ENCODE measurements at regions of chr3 and their contacts with region 1.

Region 1: DNA sequence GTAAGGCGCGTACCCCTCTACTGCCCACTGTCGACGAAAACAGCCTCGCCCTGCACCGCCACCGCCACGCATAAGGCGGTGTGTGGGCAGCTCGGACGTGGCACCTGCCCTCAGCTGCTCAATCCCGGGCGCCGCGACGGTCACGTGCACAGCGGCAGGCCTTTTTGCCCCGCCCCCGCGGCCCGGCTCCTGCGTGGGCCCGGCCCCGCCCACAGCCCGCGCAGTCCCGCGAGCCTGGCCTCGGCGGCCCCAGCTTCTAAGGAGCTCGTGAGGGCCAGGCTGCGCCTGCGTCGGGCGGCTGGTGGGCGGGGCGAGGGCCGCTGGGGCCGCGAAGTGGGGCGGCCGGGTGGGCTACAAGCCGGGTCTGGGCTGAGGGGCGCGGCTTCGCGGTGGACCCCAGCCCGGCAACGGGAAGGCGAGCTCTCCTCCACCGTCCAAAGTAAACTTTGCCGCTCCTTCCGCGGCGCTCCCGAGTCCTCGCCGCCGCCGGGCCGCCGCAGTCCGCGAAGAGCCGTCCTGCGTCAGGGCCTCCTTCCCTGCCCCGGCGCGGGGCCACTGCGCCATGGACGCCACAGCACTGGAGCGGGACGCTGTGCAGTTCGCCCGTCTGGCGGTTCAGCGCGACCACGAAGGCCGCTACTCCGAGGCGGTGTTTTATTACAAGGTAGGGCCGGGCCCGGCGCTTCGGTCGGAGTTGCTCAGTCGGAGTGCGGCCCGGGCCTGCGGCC is at the start of gene CAPN7:
- DNase-seq: peak; percentile 97
- ATAC-seq: peak; percentile 89
- H3K4me3 ChIP-seq: peak within 1 kb of the TSS; percentile 71 to 95 (median 78)
- H3K4me3 Mint-ChIP-seq: peak within 1 kb of the TSS; percentile 94
- H3K27ac ChIP-seq: peak within 1 kb of the TSS; percentile 68 to 93
- H3K27ac Mint-ChIP-seq: peak within 1 kb of the TSS; percentile 93
- H3K4me1 ChIP-seq: peaks cover 16 to 19% of the 10 kb centered on the region in 2 donors
- H3K4me1 Mint-ChIP-seq: peaks cover 25% of the 10 kb centered on the region
- H3K27me3 ChIP-seq: no peaks in the 10 kb centered on the region
- H3K27me3 Mint-ChIP-seq: no peaks in the 10 kb centered on the region
- CTCF ChIP-seq: no peak
- total RNA-seq, gene CAPN7: 85.9 and 95.5 TPM in 2 replicates

Region 2: GRCh38 chr3:13282986-13283876 is 1922.9 kb before region 1 on chr3:
- CTCF ChIA-PET with region 1: no interaction called
- POLR2A ChIA-PET with region 1: no interaction called
- intact Hi-C with region 1: no loop called
- DNase-seq: peak; percentile 62
- ATAC-seq: peak; percentile 74
- H3K4me3 ChIP-seq: peak overlapping the region in 4 of 5 experiments; percentile 3 to 47 (median 36)
- H3K4me3 Mint-ChIP-seq: peak overlapping the region; percentile 86
- H3K27ac ChIP-seq: no peak overlapping the region
- H3K27ac Mint-ChIP-seq: no peak overlapping the region
- H3K4me1 ChIP-seq: peaks cover 21% of the 10 kb centered on the region in 2 donors
- H3K4me1 Mint-ChIP-seq: peaks cover 13% of the 10 kb centered on the region
- H3K27me3 ChIP-seq: peaks cover 2 to 58% (median 37%) of the 10 kb centered on the region in 4 experiments
- H3K27me3 Mint-ChIP-seq: peaks cover 46% of the 10 kb centered on the region
- CTCF ChIP-seq: peak; percentile 49

Region 3: DNA sequence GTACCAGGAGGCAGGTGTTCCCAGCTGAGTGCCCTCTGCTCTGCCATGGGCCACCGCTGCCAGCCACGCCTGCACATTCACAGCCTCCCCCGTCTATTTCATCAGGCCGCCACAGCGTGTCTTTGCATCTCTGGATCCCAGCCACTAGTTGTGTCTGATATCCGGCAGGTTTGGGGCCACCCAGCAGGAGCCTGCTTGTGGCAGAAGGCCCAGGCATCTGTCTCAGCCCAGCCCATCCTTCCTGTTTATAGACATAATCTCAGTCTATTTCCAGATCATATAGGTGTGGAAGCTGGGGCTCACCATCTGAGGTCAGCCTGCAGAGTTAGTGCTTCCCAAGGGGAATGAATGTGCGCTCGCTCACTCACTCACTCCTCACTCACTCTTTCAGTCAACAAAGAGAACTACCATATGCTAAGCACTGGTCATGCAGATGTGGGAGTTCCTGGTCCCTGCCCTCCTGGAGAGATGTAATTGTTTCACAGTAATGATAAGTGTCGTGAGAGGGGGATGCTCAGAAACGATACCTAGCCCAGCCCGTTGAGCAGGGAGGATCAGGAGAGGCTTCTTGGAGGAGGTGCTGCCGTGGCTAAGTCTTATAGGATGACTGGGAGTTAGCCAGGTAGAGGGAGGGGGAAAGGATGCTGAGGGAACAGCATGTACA is 326.8 kb before region 1 on chr3:
- CTCF ChIA-PET with region 1: no interaction called
- POLR2A ChIA-PET with region 1: no interaction called
- intact Hi-C with region 1: no loop called
- DNase-seq: no peak
- ATAC-seq: no peak
- H3K4me3 ChIP-seq: no peak overlapping the region
- H3K4me3 Mint-ChIP-seq: no peak overlapping the region
- H3K27ac ChIP-seq: no peak overlapping the region
- H3K27ac Mint-ChIP-seq: no peak overlapping the region
- H3K4me1 ChIP-seq: peaks cover 0 to 6% of the 10 kb centered on the region in 2 donors
- H3K4me1 Mint-ChIP-seq: peaks cover 6% of the 10 kb centered on the region
- H3K27me3 ChIP-seq: peaks cover 0 to 8% (median 0%) of the 10 kb centered on the region in 4 experiments
- H3K27me3 Mint-ChIP-seq: peaks cover 29% of the 10 kb centered on the region
- CTCF ChIP-seq: no peak

Region 4: DNA sequence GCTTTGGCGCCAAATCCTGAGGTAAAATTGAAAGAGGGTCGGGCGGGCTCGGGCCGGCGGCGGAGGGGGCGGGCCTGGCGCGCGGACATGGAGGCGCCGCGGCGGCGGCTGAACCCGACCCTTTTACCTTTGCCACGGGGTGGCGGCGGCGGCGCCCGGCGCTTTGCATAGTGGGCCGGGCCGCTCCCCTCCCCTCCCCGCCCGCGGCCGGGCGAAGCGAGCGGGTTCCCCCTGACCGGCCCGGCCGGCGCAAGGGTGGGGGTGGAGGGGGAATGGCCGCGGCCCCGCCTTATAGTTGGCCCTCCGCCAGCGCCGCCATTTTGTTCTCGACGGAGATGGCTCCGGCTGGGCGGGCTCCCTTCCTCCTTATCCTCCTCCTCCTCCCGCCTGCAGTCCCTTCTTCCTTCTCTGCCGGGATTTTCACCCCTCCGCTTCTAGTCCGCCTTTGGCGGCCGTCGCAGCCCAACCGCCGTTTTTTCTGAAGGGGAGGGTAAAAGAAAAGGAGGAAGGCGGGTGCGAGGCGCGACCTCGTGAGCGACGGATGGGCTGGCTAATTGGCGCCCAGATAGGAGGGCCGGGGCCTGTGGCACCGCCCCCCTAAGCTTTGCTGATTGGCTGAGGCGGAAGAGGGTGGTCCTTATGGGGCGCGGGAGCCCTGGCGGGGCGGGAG is 258.1 kb before region 1 on chr3:
- CTCF ChIA-PET with region 1: no interaction called
- POLR2A ChIA-PET with region 1: no interaction called
- intact Hi-C with region 1: loop called (anchors 5 kb)
- DNase-seq: peak; percentile 98
- ATAC-seq: peak; percentile 86
- H3K4me3 ChIP-seq: peak overlapping the region; percentile 30 to 100 (median 94)
- H3K4me3 Mint-ChIP-seq: peak overlapping the region; percentile 99
- H3K27ac ChIP-seq: peak overlapping the region; percentile 98 to 99
- H3K27ac Mint-ChIP-seq: peak overlapping the region; percentile 100
- H3K4me1 ChIP-seq: peaks cover 25 to 29% of the 10 kb centered on the region in 2 donors
- H3K4me1 Mint-ChIP-seq: peaks cover 49% of the 10 kb centered on the region
- H3K27me3 ChIP-seq: no peaks in the 10 kb centered on the region
- H3K27me3 Mint-ChIP-seq: no peaks in the 10 kb centered on the region
- CTCF ChIP-seq: no peak

Region 5: DNA sequence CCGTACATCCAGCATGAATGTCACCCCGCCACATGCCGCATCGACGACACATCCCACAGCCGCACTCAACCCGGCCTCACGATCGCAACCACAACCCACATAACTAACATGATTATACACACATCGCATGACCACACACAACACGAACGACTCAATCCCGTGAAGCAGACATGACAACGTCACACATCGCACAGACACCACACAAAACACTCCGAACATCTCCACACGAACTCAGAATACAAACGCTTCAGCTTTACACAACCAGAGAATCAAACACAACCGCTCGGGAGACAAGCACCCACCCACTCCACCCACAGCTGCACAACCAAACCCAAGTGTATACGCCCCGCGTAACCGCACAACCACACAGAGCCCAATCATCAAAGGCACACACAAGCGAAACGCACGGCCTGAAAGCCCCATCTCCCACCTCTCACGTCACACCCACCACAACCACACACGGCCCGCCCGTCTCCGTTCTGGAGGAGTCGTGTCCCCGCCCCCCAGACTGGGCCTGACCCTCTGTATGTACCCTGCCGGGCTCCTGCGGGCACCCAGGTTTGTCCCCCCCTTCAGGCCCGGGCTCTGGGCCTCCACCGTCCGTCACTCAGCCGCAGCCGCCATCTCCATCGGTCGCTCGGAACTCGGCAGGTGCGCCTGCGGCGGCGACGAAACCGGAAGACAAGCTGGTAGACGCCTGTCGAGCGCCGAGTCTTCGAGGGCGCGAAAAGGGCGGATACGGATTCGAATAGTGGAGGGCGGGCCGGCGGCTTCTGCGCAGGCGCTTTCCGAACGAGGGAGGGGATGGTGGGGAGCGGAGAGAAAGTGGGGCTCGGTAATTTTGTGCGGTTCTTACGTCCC is 107.4 kb before region 1 on chr3 and contains the start of gene RBSN:
- CTCF ChIA-PET with region 1: interaction called, 3 read pairs
- POLR2A ChIA-PET with region 1: interaction called, 3 read pairs
- intact Hi-C with region 1: loop called (anchors 1 kb)
- DNase-seq: peak; percentile 97
- ATAC-seq: peak; percentile 84
- H3K4me3 ChIP-seq: peak within 1 kb of the TSS; percentile 73 to 94 (median 82)
- H3K4me3 Mint-ChIP-seq: peak within 1 kb of the TSS; percentile 98
- H3K27ac ChIP-seq: peak within 1 kb of the TSS; percentile 91 to 97
- H3K27ac Mint-ChIP-seq: peak within 1 kb of the TSS; percentile 96
- H3K4me1 ChIP-seq: peaks cover 13 to 23% of the 10 kb centered on the region in 2 donors
- H3K4me1 Mint-ChIP-seq: peaks cover 30% of the 10 kb centered on the region
- H3K27me3 ChIP-seq: peaks cover 0 to 9% (median 0%) of the 10 kb centered on the region in 4 experiments
- H3K27me3 Mint-ChIP-seq: no peaks in the 10 kb centered on the region
- CTCF ChIP-seq: no peak
- total RNA-seq, gene RBSN: 31.2 and 32.6 TPM in 2 replicates

Region 6: DNA sequence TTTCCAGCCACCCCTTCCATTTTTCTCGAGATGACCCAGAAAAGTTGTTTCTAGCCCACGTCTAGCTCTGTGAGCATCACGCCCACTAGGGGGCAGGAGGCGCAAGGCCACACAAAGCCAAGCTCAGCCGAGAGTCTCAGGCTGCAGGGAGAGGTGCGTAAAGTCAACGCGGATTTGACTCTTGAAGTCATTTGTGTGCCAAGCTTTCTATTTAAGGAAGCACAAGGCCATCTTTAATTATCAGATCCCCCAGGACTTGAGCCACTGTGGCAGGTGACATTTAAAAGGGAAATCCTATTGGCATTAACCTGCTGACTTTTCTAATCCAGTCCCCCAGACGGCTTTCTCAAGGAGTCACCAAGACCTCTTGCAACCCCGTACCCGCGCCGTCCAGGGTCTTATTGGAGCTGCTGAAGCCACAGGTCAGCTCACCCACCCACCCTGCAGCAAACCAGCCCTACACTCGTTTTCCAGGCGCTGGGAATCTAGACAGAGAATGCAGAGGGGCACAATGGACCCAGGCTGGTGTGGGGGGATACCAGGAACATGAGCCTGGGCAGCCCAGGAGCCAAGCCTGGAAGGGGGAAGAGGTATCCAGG is 62.0 kb after region 1 on chr3:
- CTCF ChIA-PET with region 1: interaction called, 31 read pairs
- POLR2A ChIA-PET with region 1: no interaction called
- intact Hi-C with region 1: loop called (anchors 2 kb)
- DNase-seq: peak; percentile 87
- ATAC-seq: peak; percentile 41
- H3K4me3 ChIP-seq: no peak overlapping the region
- H3K4me3 Mint-ChIP-seq: peak overlapping the region; percentile 39
- H3K27ac ChIP-seq: no peak overlapping the region
- H3K27ac Mint-ChIP-seq: no peak overlapping the region
- H3K4me1 ChIP-seq: peaks cover 71 to 79% of the 10 kb centered on the region in 2 donors
- H3K4me1 Mint-ChIP-seq: peaks cover 81% of the 10 kb centered on the region
- H3K27me3 ChIP-seq: no peaks in the 10 kb centered on the region
- H3K27me3 Mint-ChIP-seq: no peaks in the 10 kb centered on the region
- CTCF ChIP-seq: peak; percentile 92

Region 7: GRCh38 chr3:15405448-15406050 is 199.5 kb after region 1 on chr3:
- CTCF ChIA-PET with region 1: interaction called, 305 read pairs
- POLR2A ChIA-PET with region 1: interaction called, 4 read pairs
- intact Hi-C with region 1: loop called (anchors 1 kb)
- DNase-seq: peak; percentile 80
- ATAC-seq: peak; percentile 73
- H3K4me3 ChIP-seq: no peak overlapping the region
- H3K4me3 Mint-ChIP-seq: no peak overlapping the region
- H3K27ac ChIP-seq: no peak overlapping the region
- H3K27ac Mint-ChIP-seq: no peak overlapping the region
- H3K4me1 ChIP-seq: peaks cover 25 to 30% of the 10 kb centered on the region in 2 donors
- H3K4me1 Mint-ChIP-seq: peaks cover 19% of the 10 kb centered on the region
- H3K27me3 ChIP-seq: no peaks in the 10 kb centered on the region
- H3K27me3 Mint-ChIP-seq: no peaks in the 10 kb centered on the region
- CTCF ChIP-seq: peak; percentile 84

Region 8: DNA sequence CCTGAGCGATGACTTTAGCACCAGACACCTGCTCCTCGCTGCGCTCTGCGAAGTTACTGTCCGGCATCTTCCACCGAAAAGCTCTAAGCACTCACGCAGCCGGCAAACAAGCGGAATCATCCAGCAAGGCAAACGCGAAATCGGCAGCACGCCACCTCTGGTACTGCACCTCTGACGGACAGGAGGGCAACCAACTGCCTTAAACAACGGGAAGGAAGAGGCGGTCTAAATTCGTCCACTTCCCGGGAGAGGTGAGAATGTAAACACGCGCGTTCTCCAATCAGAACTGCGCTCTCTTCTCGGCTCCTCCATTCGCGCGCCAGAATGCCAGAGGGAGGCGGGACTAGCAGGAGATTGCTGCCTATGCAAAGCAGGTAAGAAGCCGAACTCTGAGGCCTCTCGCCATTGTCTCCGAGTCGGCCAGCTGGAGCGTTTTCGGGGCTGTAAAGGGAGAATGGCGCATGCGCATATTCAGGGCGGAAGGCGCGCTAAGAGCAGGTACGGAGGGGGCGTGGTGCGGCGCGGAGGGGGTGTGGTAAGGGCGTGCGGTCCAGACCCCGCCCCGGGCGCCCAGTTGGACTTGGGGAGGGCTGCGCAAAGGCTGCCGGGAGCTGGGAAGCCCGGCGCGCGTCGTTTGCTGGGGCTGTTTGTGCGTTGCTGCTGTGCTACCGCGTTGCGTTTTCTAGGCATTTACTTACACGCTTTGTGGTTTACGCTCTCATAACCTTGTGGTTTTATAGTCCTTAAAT is 395.5 kb after region 1 on chr3 and contains the starts of genes BTD and HACL1:
- CTCF ChIA-PET with region 1: interaction called, 3 read pairs
- POLR2A ChIA-PET with region 1: no interaction called
- intact Hi-C with region 1: loop called (anchors 1 kb)
- DNase-seq: peak; percentile 99
- ATAC-seq: peak; percentile 88
- H3K4me3 ChIP-seq: peak within 1 kb of the TSS; percentile 67 to 99 (median 92)
- H3K4me3 Mint-ChIP-seq: peak within 1 kb of the TSS; percentile 100
- H3K27ac ChIP-seq: peak within 1 kb of the TSS; percentile 81 to 87
- H3K27ac Mint-ChIP-seq: peak within 1 kb of the TSS; percentile 99
- H3K4me1 ChIP-seq: peaks cover 16 to 23% of the 10 kb centered on the region in 2 donors
- H3K4me1 Mint-ChIP-seq: peaks cover 41% of the 10 kb centered on the region
- H3K27me3 ChIP-seq: no peaks in the 10 kb centered on the region
- H3K27me3 Mint-ChIP-seq: no peaks in the 10 kb centered on the region
- CTCF ChIP-seq: peak; percentile 31
- total RNA-seq, gene BTD: 21.9 and 25.3 TPM in 2 replicates
- total RNA-seq, gene HACL1: 38.7 and 38.9 TPM in 2 replicates

Region 9: GRCh38 chr3:16177962-16178627 is 972.0 kb after region 1 on chr3:
- CTCF ChIA-PET with region 1: interaction called, 14 read pairs
- POLR2A ChIA-PET with region 1: no interaction called
- intact Hi-C with region 1: no loop called
- DNase-seq: peak; percentile 55
- ATAC-seq: no peak
- H3K4me3 ChIP-seq: no peak overlapping the region
- H3K4me3 Mint-ChIP-seq: no peak overlapping the region
- H3K27ac ChIP-seq: no peak overlapping the region
- H3K27ac Mint-ChIP-seq: no peak overlapping the region
- H3K4me1 ChIP-seq: peaks cover 3 to 4% of the 10 kb centered on the region in 2 donors
- H3K4me1 Mint-ChIP-seq: peaks cover 7% of the 10 kb centered on the region
- H3K27me3 ChIP-seq: peaks cover 0 to 7% (median 4%) of the 10 kb centered on the region in 4 experiments
- H3K27me3 Mint-ChIP-seq: peaks cover 27% of the 10 kb centered on the region
- CTCF ChIP-seq: peak; percentile 72

Measured in B cell (primary cell).